Activated naive CD4-positive, alpha-beta T cell treated with anti-CD3 and anti-CD28 coated beads, Interleukin-2, amount 10 ng/mL, durations not matched to agents 7 days and 5 days (primary cell): ENCODE measurements at regions of chr3 and their contacts with region 1.

Region 1: GRCh38 chr3:14921078-14921616 is 26.2 kb upstream of the NR2C2 start:
- DNase-seq: peak; percentile 88
- H3K4me3 Mint-ChIP-seq: no peak overlapping the region
- H3K27ac Mint-ChIP-seq: no peak overlapping the region
- H3K4me1 Mint-ChIP-seq: no peaks in the 10 kb centered on the region
- H3K27me3 Mint-ChIP-seq: peaks cover 27% of the 10 kb centered on the region

Region 2: GRCh38 chr3:14633819-14634424 is 287.2 kb before region 1 on chr3:
- CTCF ChIA-PET with region 1: interaction called, 30 read pairs
- DNase-seq: peak; percentile 69
- H3K4me3 Mint-ChIP-seq: no peak overlapping the region
- H3K27ac Mint-ChIP-seq: peak overlapping the region; percentile 56
- H3K4me1 Mint-ChIP-seq: no peaks in the 10 kb centered on the region
- H3K27me3 Mint-ChIP-seq: peaks cover 42% of the 10 kb centered on the region

Region 3: GRCh38 chr3:14687360-14687759 is 233.8 kb before region 1 on chr3:
- CTCF ChIA-PET with region 1: no interaction called
- DNase-seq: no peak
- H3K4me3 Mint-ChIP-seq: no peak overlapping the region
- H3K27ac Mint-ChIP-seq: no peak overlapping the region
- H3K4me1 Mint-ChIP-seq: no peaks in the 10 kb centered on the region
- H3K27me3 Mint-ChIP-seq: no peaks in the 10 kb centered on the region

Region 4: GRCh38 chr3:14791343-14791945 is 129.7 kb before region 1 on chr3:
- CTCF ChIA-PET with region 1: interaction called, 80 read pairs
- DNase-seq: peak; percentile 85
- H3K4me3 Mint-ChIP-seq: no peak overlapping the region
- H3K27ac Mint-ChIP-seq: no peak overlapping the region
- H3K4me1 Mint-ChIP-seq: peaks cover 9% of the 10 kb centered on the region
- H3K27me3 Mint-ChIP-seq: peaks cover 72% of the 10 kb centered on the region